ENCODE measurements at regions of chr4 and their contacts with region 1.

Region 1: DNA sequence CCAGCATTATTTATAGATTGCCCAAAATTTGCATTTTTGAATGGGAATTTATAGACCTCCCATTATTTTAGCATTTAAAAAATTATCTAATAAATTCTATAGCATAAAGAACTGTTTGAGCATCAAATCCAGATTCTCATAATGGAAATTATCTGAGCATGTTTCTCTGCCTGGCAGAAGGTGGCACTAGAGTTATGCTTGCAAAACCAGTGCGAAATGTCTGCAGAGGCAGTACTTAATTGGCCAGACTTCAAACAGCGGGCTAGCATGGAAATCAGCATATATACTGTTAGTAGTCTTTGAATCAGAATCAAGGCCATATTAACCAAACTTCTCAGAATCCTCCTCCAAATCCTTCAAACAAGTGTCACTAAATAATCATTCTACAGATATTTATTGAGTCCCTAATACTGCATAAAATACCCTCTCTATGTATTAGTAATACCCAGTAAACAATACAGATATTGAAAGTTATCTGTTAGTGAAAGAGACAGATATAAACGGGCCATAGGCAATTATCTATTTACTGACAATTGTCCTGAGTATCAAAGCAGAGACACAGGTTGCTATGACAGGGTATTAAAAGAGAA is 78.7 kb upstream of the DCLK2 start:
- DNase-seq: peak; percentile 88
- H3K4me3 ChIP-seq: no peak overlapping the region
- H3K27ac ChIP-seq: no peak overlapping the region
- H3K4me1 ChIP-seq: peaks cover 28% of the 10 kb centered on the region
- H3K27me3 ChIP-seq: no peaks in the 10 kb centered on the region

Region 2: GRCh38 chr4:150090836-150091235 is 91.3 kb after region 1 on chr4:
- in situ Hi-C with region 1: no loop called
- DNase-seq: no peak
- H3K4me3 ChIP-seq: no peak overlapping the region
- H3K27ac ChIP-seq: no peak overlapping the region
- H3K4me1 ChIP-seq: no peaks in the 10 kb centered on the region
- H3K27me3 ChIP-seq: no peaks in the 10 kb centered on the region

Region 3: DNA sequence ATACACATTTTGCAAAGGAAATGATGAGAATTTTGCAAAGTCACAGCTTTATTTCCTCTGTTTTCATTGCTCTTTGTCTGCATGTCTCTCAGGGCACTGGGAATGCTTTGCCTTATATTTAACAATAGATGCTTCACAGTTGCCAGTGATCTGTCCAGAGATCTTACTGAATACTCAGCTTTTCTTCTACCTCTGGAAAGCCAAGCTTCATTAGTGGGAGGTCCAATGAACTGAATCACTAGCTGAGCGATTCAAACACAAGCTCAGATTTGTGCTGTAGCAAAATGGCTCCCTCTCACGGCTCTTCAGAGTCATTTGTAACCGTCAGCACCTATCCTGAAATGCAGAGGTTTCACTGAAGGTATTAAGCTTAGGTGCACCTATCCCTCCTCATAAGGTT is 217.6 kb after region 1 on chr4:
- in situ Hi-C with region 1: loop called (anchors 10 kb)
- DNase-seq: peak; percentile 89
- H3K4me3 ChIP-seq: no peak overlapping the region
- H3K27ac ChIP-seq: 0 out of 2 replicates have a peak overlapping the region, but pooled peaks have one; percentile 6
- H3K4me1 ChIP-seq: peaks cover 31% of the 10 kb centered on the region
- H3K27me3 ChIP-seq: no peaks in the 10 kb centered on the region

Region 4: DNA sequence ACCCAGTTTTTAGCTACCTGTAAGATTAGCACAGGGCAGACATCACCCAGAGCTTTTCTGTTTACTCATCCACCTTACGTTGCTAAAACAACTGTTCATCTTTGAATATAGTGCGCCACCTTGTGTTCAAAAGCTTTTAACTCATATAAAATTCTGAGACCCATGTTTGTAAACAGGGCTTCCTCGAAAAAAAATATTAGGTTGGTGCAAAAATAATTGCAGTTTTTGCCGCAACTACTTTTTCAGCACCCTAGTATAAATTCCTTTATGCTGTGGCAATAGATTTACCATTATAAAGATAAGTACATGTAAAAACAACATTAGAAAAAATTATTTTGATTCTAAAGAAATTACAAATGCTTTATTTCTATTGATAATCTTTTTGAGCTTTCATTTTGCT is 867.6 kb after region 1 on chr4:
- in situ Hi-C with region 1: loop called (anchors 10 kb)
- DNase-seq: peak; percentile 88
- H3K4me3 ChIP-seq: no peak overlapping the region
- H3K27ac ChIP-seq: no peak overlapping the region
- H3K4me1 ChIP-seq: no peaks in the 10 kb centered on the region
- H3K27me3 ChIP-seq: no peaks in the 10 kb centered on the region